Activated CD4-positive, alpha-beta memory T cell treated with anti-CD3 and anti-CD28 coated beads for 36 hours (primary cell): ENCODE measurements at regions of chr15 and their contacts with region 1.

Region 1: GRCh38 chr15:84734794-84735479 is 13.5 kb upstream of the ZNF592 start:
- DNase-seq: peak; percentile 86
- H3K4me3 Mint-ChIP-seq: peak overlapping the region; percentile 67
- H3K27ac Mint-ChIP-seq: peak overlapping the region; percentile 96
- H3K4me1 Mint-ChIP-seq: peaks cover 61% of the 10 kb centered on the region
- H3K27me3 Mint-ChIP-seq: no peaks in the 10 kb centered on the region

Region 2: GRCh38 chr15:84633311-84634227 is 101.4 kb before region 1 on chr15:
- CTCF ChIA-PET with region 1: no interaction called
- POLR2A ChIA-PET with region 1: interaction called, 4 read pairs
- intact Hi-C with region 1: loop called (anchors 1 kb)
- DNase-seq: peak; percentile 73
- H3K4me3 Mint-ChIP-seq: peak overlapping the region; percentile 98
- H3K27ac Mint-ChIP-seq: peak overlapping the region; percentile 96
- H3K4me1 Mint-ChIP-seq: peaks cover 47% of the 10 kb centered on the region
- H3K27me3 Mint-ChIP-seq: no peaks in the 10 kb centered on the region

Region 3: DNA sequence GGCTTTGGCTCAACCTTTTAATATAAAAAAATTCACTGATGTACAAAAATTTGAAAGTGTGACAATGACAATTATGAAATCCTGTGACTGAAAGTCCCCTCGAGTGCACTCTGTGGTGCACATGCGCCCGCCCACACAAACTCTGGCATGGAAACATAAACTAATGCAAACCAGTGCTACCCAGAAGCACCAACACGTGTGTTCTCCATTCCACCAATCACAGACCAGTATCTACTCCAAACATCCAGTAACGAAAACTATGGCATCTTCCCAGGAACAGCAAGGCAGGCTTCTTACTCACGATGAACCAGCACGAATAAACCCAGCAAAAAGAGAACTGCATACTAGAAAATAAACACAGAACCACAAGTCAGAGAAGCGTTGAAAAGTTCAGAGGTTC is 65.2 kb before region 1 on chr15:
- CTCF ChIA-PET with region 1: interaction called, 6 read pairs
- POLR2A ChIA-PET with region 1: interaction called, 6 read pairs
- intact Hi-C with region 1: loop called (anchors 1 kb)
- DNase-seq: peak; percentile 76
- H3K4me3 Mint-ChIP-seq: no peak overlapping the region
- H3K27ac Mint-ChIP-seq: peak overlapping the region; percentile 79
- H3K4me1 Mint-ChIP-seq: peaks cover 60% of the 10 kb centered on the region
- H3K27me3 Mint-ChIP-seq: no peaks in the 10 kb centered on the region

Region 4: GRCh38 chr15:84716036-84716799 is 18.7 kb before region 1 on chr15 and contains the start of gene SEC11A:
- CTCF ChIA-PET with region 1: interaction called, 28 read pairs
- POLR2A ChIA-PET with region 1: interaction called, 58 read pairs
- intact Hi-C with region 1: loop called (anchors 1 kb)
- DNase-seq: peak; percentile 96
- H3K4me3 Mint-ChIP-seq: peak within 1 kb of the TSS; percentile 92
- H3K27ac Mint-ChIP-seq: peak within 1 kb of the TSS; percentile 93
- H3K4me1 Mint-ChIP-seq: peaks cover 46% of the 10 kb centered on the region
- H3K27me3 Mint-ChIP-seq: no peaks in the 10 kb centered on the region
- total RNA-seq, gene SEC11A: 132 to 136 TPM

Region 5: DNA sequence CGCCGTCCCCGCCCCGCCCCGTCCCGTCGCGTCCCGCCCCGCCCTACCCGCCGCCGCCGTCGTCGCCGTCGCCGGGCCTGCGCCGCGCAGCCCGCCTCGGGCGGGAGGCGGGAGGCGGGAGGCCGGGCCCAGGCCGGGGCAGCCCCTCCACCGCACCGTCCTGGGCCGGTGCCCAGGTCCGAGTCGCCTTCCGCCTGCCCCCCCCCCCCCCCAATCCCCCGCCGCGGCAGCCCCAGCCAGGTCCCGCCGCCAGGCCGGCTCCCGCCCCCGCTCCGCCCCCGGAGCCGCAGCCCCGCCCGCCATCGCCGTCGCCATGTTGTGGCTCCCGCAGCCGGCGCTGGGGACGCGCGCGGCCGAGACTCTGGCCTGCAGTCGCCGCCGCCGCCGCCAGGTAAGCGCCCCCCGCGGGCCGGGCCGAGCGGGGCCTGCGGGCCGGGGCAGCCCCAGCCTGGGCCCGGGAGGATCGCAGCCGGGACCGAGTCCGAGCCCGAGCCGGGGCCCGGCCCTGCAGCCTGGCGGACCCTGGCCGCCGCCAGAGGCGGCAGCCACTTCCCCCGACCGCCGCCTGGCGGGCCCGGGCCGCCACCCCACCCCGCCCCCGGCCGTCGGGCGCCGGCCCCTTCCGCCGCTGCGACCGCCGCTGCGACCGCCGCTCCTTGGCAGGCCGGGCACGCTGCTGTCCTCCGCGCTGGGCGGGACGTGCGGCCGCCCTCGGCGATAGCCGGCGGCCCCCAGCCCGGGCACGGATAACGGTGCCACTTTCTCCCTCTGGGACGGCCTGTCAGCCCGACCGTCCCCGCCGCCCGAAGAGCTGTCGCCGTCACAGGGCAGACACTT is 13.6 kb after region 1 on chr15 and contains the start of gene ZNF592:
- CTCF ChIA-PET with region 1: interaction called, 12 read pairs
- POLR2A ChIA-PET with region 1: interaction called, 24 read pairs
- intact Hi-C with region 1: loop called (anchors 1 kb)
- DNase-seq: peak; percentile 84
- H3K4me3 Mint-ChIP-seq: peak within 1 kb of the TSS; percentile 97
- H3K27ac Mint-ChIP-seq: peak within 1 kb of the TSS; percentile 98
- H3K4me1 Mint-ChIP-seq: peaks cover 57% of the 10 kb centered on the region
- H3K27me3 Mint-ChIP-seq: no peaks in the 10 kb centered on the region
- total RNA-seq, gene ZNF592: 23.8 to 24.3 TPM

Region 6: GRCh38 chr15:84761607-84762131 is 26.7 kb after region 1 on chr15:
- CTCF ChIA-PET with region 1: no interaction called
- POLR2A ChIA-PET with region 1: interaction called, 8 read pairs
- intact Hi-C with region 1: loop called (anchors 1 kb)
- DNase-seq: no peak
- H3K4me3 Mint-ChIP-seq: no peak overlapping the region
- H3K27ac Mint-ChIP-seq: no peak overlapping the region
- H3K4me1 Mint-ChIP-seq: peaks cover 22% of the 10 kb centered on the region
- H3K27me3 Mint-ChIP-seq: no peaks in the 10 kb centered on the region